Endothelial cell of umbilical vein (primary cell): ENCODE measurements at regions of chr7 and their contacts with region 1.

Region 1: DNA sequence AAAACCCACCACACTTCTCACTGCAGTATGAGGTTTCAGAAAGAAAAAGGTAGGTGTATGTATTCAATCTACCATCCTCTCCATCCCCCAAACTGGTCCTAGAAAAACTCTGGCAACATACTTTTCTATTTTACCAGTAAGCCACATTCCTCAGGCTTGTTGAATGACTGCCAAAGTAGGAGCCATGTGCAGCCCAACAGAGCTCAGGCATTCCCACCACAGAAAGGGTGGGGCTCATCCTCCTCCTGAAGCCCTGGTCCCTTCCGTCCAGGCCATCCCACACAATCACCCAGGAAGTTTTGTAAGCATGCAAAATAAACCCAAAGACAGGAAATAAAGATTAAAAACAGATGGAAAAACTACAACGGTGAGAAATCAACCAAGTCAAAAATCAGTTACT is 57.2 kb downstream of the MAD1L1 start:
- DNase-seq: peak; percentile 23
- H3K4me3 ChIP-seq: no peak overlapping the region
- H3K27ac ChIP-seq: no peak overlapping the region
- H3K4me1 ChIP-seq: no peaks in the 10 kb centered on the region
- H3K27me3 ChIP-seq: no peaks in the 10 kb centered on the region
- CTCF ChIP-seq: no peak
- POLR2A ChIP-seq: no peak

Region 2: GRCh38 chr7:1781369-1781768 is 394.1 kb before region 1 on chr7:
- CTCF ChIA-PET with region 1: no interaction called
- POLR2A ChIA-PET with region 1: interaction called, 10 read pairs
- dilution Hi-C with region 1: no loop called
- intact Hi-C with region 1: no loop called
- DNase-seq: no peak
- H3K4me3 ChIP-seq: no peak overlapping the region
- H3K27ac ChIP-seq: no peak overlapping the region
- H3K4me1 ChIP-seq: no peaks in the 10 kb centered on the region
- H3K27me3 ChIP-seq: no peaks in the 10 kb centered on the region
- CTCF ChIP-seq: no peak
- POLR2A ChIP-seq: no peak